GM18951 (cell line): ENCODE measurements at regions of chr6 and their contacts with region 1.

Region 1: GRCh38 chr6:26103770-26104456 is 16.7 kb downstream of the HFE start:
- POLR2A ChIP-seq: peak; percentile 99

Region 2: GRCh38 chr6:26064619-26065257 is 39.2 kb before region 1 on chr6:
- in situ Hi-C with region 1: loop called (anchors 5 kb)
- POLR2A ChIP-seq: no peak